ENCODE measurements at regions of chr10 and their contacts with region 1.

Region 1: GRCh38 chr10:91632671-91633550 is at the start of gene PPP1R3C:
- DNase-seq: no peak
- ATAC-seq: no peak
- H3K4me3 ChIP-seq: no peak within 1 kb of the TSS
- H3K27ac ChIP-seq: no peak within 1 kb of the TSS
- H3K4me1 ChIP-seq: peaks cover 5 to 19% of the 10 kb centered on the region in 2 experiments; a peak in 4 of 5 replicates
- H3K27me3 ChIP-seq: no peaks in the 10 kb centered on the region
- CTCF ChIP-seq: no peak
- EP300 ChIP-seq: no peak
- POLR2A ChIP-seq: no peak
- RAD21 ChIP-seq: no peak
- polyA plus RNA-seq, gene PPP1R3C: 0.13 to 0.14 TPM

Region 2: DNA sequence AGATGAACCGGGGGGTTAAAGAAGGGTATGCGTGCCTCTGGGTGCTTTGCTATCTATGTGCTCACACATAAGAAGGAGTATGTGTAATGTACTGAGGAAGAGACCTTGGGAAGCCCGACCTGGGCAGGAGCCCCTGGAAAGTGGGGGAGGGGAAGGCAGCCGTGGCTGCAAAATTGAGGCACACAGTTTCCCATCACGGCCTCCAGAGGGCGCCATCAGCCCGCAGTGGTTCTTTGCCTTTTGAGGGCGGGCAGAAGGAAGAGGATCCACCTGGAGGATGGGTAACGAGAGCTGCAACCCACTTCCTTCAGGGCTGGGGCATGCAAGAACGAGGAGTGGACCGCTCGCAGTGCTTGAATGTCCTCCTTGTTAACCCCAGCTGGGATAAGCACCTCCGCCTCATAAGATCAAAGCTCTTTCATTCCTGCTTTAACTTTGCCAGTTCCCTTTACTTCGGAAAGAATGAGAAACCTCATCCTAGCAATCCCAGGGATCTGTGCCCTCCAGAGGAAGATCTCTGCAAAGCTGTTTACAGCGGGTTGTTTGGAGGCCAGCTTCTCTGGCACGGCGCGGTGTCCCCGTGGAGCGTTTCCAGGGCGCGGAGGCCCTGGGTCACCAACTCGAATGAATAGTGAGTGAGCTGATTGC is 334.6 kb before region 1 on chr10:
- CTCF ChIA-PET with region 1: no interaction called
- POLR2A ChIA-PET with region 1: no interaction called
- in situ Hi-C with region 1: no loop called
- intact Hi-C with region 1: loop called (anchors 1 kb)
- DNase-seq: peak; percentile 66 to 78 (median 74)
- ATAC-seq: peak; percentile 91
- H3K4me3 ChIP-seq: no peak overlapping the region
- H3K27ac ChIP-seq: no peak overlapping the region
- H3K4me1 ChIP-seq: peaks cover 0 to 3% of the 10 kb centered on the region in 2 experiments; a peak in 1 of 5 replicates
- H3K27me3 ChIP-seq: no peaks in the 10 kb centered on the region
- CTCF ChIP-seq: peak; percentile 81 to 88 (median 88)
- EP300 ChIP-seq: no peak
- POLR2A ChIP-seq: no peak
- RAD21 ChIP-seq: peak; percentile 89 to 91

Region 3: GRCh38 chr10:91409869-91410637 is 222.9 kb before region 1 on chr10 and contains the start of gene HECTD2:
- CTCF ChIA-PET with region 1: no interaction called
- POLR2A ChIA-PET with region 1: no interaction called
- in situ Hi-C with region 1: no loop called
- intact Hi-C with region 1: loop called (anchors 5 kb)
- DNase-seq: peak; percentile 75 to 82 (median 81)
- ATAC-seq: peak; percentile 86
- H3K4me3 ChIP-seq: peak within 1 kb of the TSS; percentile 74
- H3K27ac ChIP-seq: peak within 1 kb of the TSS; percentile 97
- H3K4me1 ChIP-seq: peaks cover 0 to 9% of the 10 kb centered on the region in 2 experiments; a peak in 4 of 5 replicates
- H3K27me3 ChIP-seq: no peaks in the 10 kb centered on the region
- CTCF ChIP-seq: peak in 2 of 3 experiments; percentile 25 to 61; a peak in 3 of 6 replicates
- EP300 ChIP-seq: no peak
- POLR2A ChIP-seq: peak; percentile 78
- RAD21 ChIP-seq: peak; percentile 10 to 40; a peak in 2 of 4 replicates
- polyA plus RNA-seq, gene HECTD2: 1.3 to 2.1 TPM

Region 4: DNA sequence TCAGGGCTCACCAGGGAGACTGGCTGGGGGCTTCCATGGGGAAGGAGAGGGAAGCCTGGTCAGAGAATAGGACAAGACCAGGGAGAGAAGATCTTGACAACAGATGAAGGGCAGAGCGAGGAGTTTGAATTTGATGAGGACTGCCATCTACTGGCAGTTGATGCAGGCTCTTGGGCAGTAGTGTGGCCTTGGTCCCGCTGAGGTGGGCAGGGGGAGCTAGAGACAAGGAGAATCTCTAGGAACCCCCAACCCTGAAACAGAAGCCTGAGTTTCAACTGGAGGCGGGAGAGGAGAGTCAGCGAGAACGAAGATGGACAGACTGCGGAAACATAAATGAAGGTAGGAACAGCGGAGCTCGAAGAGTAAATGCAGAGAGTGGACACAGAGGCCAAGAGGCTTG is 81.1 kb before region 1 on chr10:
- CTCF ChIA-PET with region 1: interaction called, 21 read pairs
- POLR2A ChIA-PET with region 1: no interaction called
- in situ Hi-C with region 1: loop called (anchors 5 kb)
- intact Hi-C with region 1: loop called (anchors 1 kb)
- DNase-seq: peak; percentile 27 to 74 (median 48)
- ATAC-seq: peak; percentile 96
- H3K4me3 ChIP-seq: no peak overlapping the region
- H3K27ac ChIP-seq: no peak overlapping the region
- H3K4me1 ChIP-seq: no peaks in the 10 kb centered on the region; a peak in 2 of 5 replicates
- H3K27me3 ChIP-seq: no peaks in the 10 kb centered on the region
- CTCF ChIP-seq: peak; percentile 85 to 99 (median 98)
- EP300 ChIP-seq: no peak
- POLR2A ChIP-seq: no peak
- RAD21 ChIP-seq: peak; percentile 93 to 95

Region 5: GRCh38 chr10:91590142-91590903 is 42.6 kb before region 1 on chr10:
- CTCF ChIA-PET with region 1: no interaction called
- POLR2A ChIA-PET with region 1: no interaction called
- in situ Hi-C with region 1: no loop called
- intact Hi-C with region 1: loop called (anchors 5 kb)
- DNase-seq: no peak
- ATAC-seq: peak; percentile 40
- H3K4me3 ChIP-seq: no peak overlapping the region
- H3K27ac ChIP-seq: peak overlapping the region; percentile 64
- H3K4me1 ChIP-seq: peaks cover 23 to 59% of the 10 kb centered on the region in 2 experiments
- H3K27me3 ChIP-seq: no peaks in the 10 kb centered on the region
- CTCF ChIP-seq: no peak
- EP300 ChIP-seq: no peak
- POLR2A ChIP-seq: no peak
- RAD21 ChIP-seq: no peak

Region 6: GRCh38 chr10:91694170-91694794 is 61.4 kb after region 1 on chr10:
- CTCF ChIA-PET with region 1: interaction called, 3 read pairs
- POLR2A ChIA-PET with region 1: no interaction called
- in situ Hi-C with region 1: loop called (anchors 5 kb)
- intact Hi-C with region 1: loop called (anchors 2 kb)
- DNase-seq: peak; percentile 42 to 59 (median 44)
- ATAC-seq: peak; percentile 74
- H3K4me3 ChIP-seq: no peak overlapping the region
- H3K27ac ChIP-seq: no peak overlapping the region
- H3K4me1 ChIP-seq: peaks cover 0 to 6% of the 10 kb centered on the region in 2 experiments; a peak in 2 of 5 replicates
- H3K27me3 ChIP-seq: no peaks in the 10 kb centered on the region
- CTCF ChIP-seq: peak; percentile 57 to 75 (median 68)
- EP300 ChIP-seq: no peak
- POLR2A ChIP-seq: no peak
- RAD21 ChIP-seq: peak; percentile 79 to 90